ENCODE measurements at regions of chr1 and their contacts with region 1.

Region 1: GRCh38 chr1:200724064-200724463 is 14.6 kb upstream of the CAMSAP2 start:
- DNase-seq: peak; percentile 27
- ATAC-seq: no peak
- H3K4me3 ChIP-seq: no peak overlapping the region
- H3K27ac ChIP-seq: no peak overlapping the region
- H3K4me1 ChIP-seq: no peaks in the 10 kb centered on the region
- H3K27me3 ChIP-seq: no peaks in the 10 kb centered on the region
- CTCF ChIP-seq: no peak
- POLR2A ChIP-seq: no peak
- RAD21 ChIP-seq: no peak

Region 2: GRCh38 chr1:200684015-200684414 is 40.0 kb before region 1 on chr1:
- CTCF ChIA-PET with region 1: no interaction called
- POLR2A ChIA-PET with region 1: no interaction called
- dilution Hi-C with region 1: no loop called
- in situ Hi-C with region 1: no loop called
- intact Hi-C with region 1: loop called (anchors 5 kb)
- DNase-seq: peak; percentile 54
- ATAC-seq: no peak
- H3K4me3 ChIP-seq: no peak overlapping the region
- H3K27ac ChIP-seq: no peak overlapping the region
- H3K4me1 ChIP-seq: no peaks in the 10 kb centered on the region
- H3K27me3 ChIP-seq: no peaks in the 10 kb centered on the region
- CTCF ChIP-seq: no peak
- POLR2A ChIP-seq: no peak
- RAD21 ChIP-seq: no peak

Region 3: GRCh38 chr1:200850559-200850958 is 126.5 kb after region 1 on chr1:
- CTCF ChIA-PET with region 1: no interaction called
- POLR2A ChIA-PET with region 1: no interaction called
- dilution Hi-C with region 1: no loop called
- in situ Hi-C with region 1: no loop called
- intact Hi-C with region 1: no loop called
- DNase-seq: no peak
- ATAC-seq: no peak
- H3K4me3 ChIP-seq: no peak overlapping the region
- H3K27ac ChIP-seq: no peak overlapping the region
- H3K4me1 ChIP-seq: no peaks in the 10 kb centered on the region
- H3K27me3 ChIP-seq: no peaks in the 10 kb centered on the region
- CTCF ChIP-seq: no peak
- POLR2A ChIP-seq: no peak
- RAD21 ChIP-seq: no peak